K562 (cell line): ENCODE measurements at regions of chr3 and their contacts with region 1.

Region 1: DNA sequence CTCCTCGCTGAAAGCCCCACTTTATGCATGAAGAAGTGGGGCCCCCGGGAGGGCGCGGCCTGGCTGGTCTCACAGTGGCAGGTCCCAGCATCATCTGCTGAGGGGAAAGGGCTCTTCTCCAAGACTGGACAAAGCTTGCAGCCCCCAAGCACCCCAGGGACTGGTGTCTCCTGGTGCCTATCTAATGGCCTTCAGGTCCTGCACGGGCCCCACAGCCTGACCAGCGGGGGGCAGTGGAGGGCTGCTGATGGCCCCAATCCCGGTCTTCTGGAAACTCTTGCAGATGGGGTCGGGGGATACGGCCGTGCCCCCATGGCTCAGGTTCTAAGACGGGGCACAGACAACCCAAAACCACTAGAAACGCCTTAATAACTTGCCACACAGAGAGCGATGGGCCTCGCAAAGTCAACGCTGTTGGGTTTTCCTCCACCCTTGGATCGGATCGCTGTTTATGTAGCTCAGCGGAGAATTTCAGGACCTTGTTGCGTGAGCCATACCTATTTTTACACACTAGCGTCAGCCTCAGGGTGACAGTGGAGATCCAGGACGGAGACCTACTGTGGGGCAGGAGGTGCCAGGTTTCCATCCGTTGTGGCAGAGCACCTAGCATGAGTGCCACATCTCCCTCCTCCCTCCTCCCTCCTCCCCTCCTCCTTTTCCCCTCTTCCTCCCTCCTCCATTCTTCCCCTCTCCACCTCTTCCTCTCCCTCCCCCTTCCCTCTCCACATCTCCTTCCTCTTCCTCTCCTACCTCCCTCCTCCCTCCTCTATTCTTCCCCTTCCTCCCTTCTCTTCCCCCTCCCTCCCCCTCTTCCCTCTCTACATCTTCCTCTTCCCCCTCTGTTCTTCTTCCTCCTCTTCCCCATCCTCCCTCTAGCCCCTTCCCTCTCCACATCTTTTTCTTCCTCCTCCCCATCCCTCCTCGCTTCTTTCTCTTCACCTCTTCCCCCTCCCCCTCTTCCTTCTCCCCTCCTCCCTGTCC is 79.3 kb upstream of the ALDH1L1 start:
- DNase-seq: peak; percentile 37 to 52 (median 40)
- ATAC-seq: peak; percentile 81
- H3K4me3 ChIP-seq: no peak overlapping the region
- H3K27ac ChIP-seq: no peak overlapping the region; the same call in 2 of the 3 replicates
- H3K4me1 ChIP-seq: peaks cover 4 to 5% of the 10 kb centered on the region in 2 experiments; a peak in 3 of 5 replicates
- H3K27me3 ChIP-seq: peaks cover 0 to 30% of the 10 kb centered on the region in 2 experiments; a peak in 2 of 5 replicates
- CTCF ChIP-seq: peak; percentile 52 to 60 (median 58)
- EP300 ChIP-seq: no peak
- POLR2A ChIP-seq: no peak
- RAD21 ChIP-seq: peak; percentile 70 to 80

Region 2: GRCh38 chr3:126314790-126315658 is 55.3 kb after region 1 on chr3:
- CTCF ChIA-PET with region 1: no interaction called
- POLR2A ChIA-PET with region 1: no interaction called
- in situ Hi-C with region 1: no loop called
- intact Hi-C with region 1: no loop called
- DNase-seq: no peak
- ATAC-seq: no peak
- H3K4me3 ChIP-seq: no peak overlapping the region
- H3K27ac ChIP-seq: no peak overlapping the region
- H3K4me1 ChIP-seq: no peaks in the 10 kb centered on the region
- H3K27me3 ChIP-seq: peaks cover 0 to 33% of the 10 kb centered on the region in 2 experiments; a peak in 4 of 5 replicates
- CTCF ChIP-seq: no peak
- EP300 ChIP-seq: no peak
- POLR2A ChIP-seq: no peak
- RAD21 ChIP-seq: no peak

Region 3: GRCh38 chr3:126357295-126358037 is 97.8 kb after region 1 on chr3 and contains the start of gene KLF15:
- CTCF ChIA-PET with region 1: no interaction called
- POLR2A ChIA-PET with region 1: no interaction called
- in situ Hi-C with region 1: no loop called
- intact Hi-C with region 1: loop called (anchors 2 kb)
- DNase-seq: peak; percentile 82 to 90 (median 87)
- ATAC-seq: peak; percentile 82
- H3K4me3 ChIP-seq: peak within 1 kb of the TSS; percentile 40
- H3K27ac ChIP-seq: peak within 1 kb of the TSS; percentile 36; the same call in 1 of the 3 replicates
- H3K4me1 ChIP-seq: peaks cover 5 to 34% of the 10 kb centered on the region in 2 experiments; a peak in 3 of 5 replicates
- H3K27me3 ChIP-seq: peaks cover 0 to 20% of the 10 kb centered on the region in 2 experiments; a peak in 3 of 5 replicates
- CTCF ChIP-seq: no peak
- EP300 ChIP-seq: no peak
- POLR2A ChIP-seq: no peak
- RAD21 ChIP-seq: no peak
- polyA plus RNA-seq, gene KLF15: 0.08 to 0.13 TPM